Activated T-helper 2 cell treated with anti-CD3 and anti-CD28 coated beads, Interferon-gamma antibody, Interleukin-2, Interleukin-4, amounts not matched to agents 10 μg/mL and 5 μg/mL and 100 μg/mL, durations not matched to agents 14 hours and 24 hours and 36 hours (primary cell): ENCODE measurements at regions of chr9 and their contacts with region 1.

Region 1: GRCh38 chr9:71768388-71769174 is at the start of gene CEMIP2:
- DNase-seq: peak; percentile 86
- H3K4me3 Mint-ChIP-seq: peak within 1 kb of the TSS; percentile 89
- H3K27ac Mint-ChIP-seq: peak within 1 kb of the TSS; percentile 88
- H3K4me1 Mint-ChIP-seq: peaks cover 44% of the 10 kb centered on the region
- H3K27me3 Mint-ChIP-seq: no peaks in the 10 kb centered on the region
- total RNA-seq, gene CEMIP2: 44.8 and 45.3 TPM in 2 replicates

Region 2: GRCh38 chr9:71171517-71171916 is 597.1 kb before region 1 on chr9:
- intact Hi-C with region 1: no loop called
- DNase-seq: no peak
- H3K4me3 Mint-ChIP-seq: no peak overlapping the region
- H3K27ac Mint-ChIP-seq: no peak overlapping the region
- H3K4me1 Mint-ChIP-seq: no peaks in the 10 kb centered on the region
- H3K27me3 Mint-ChIP-seq: no peaks in the 10 kb centered on the region

Region 3: GRCh38 chr9:71285191-71285656 is 483.4 kb before region 1 on chr9:
- intact Hi-C with region 1: loop called (anchors 2 kb)
- DNase-seq: no peak
- H3K4me3 Mint-ChIP-seq: no peak overlapping the region
- H3K27ac Mint-ChIP-seq: no peak overlapping the region
- H3K4me1 Mint-ChIP-seq: no peaks in the 10 kb centered on the region
- H3K27me3 Mint-ChIP-seq: no peaks in the 10 kb centered on the region

Region 4: DNA sequence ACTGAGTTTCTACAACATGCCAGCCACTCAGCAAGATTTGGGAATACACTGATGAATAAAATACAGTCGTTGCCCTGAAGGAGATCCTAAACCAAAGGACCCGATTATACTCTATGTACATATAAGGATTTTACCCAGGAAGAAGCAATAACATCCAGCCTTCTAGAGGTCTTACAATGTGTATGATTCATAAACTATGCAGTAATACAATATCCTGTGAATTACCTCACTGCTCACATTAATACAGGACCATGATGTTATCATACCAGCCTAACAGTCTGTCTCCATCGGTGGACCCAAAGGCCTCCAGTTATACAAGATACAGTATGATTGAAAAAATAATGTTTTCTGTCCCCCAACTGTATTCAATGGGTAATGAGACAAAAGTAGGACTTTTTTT is 336.6 kb before region 1 on chr9:
- intact Hi-C with region 1: no loop called
- DNase-seq: no peak
- H3K4me3 Mint-ChIP-seq: no peak overlapping the region
- H3K27ac Mint-ChIP-seq: no peak overlapping the region
- H3K4me1 Mint-ChIP-seq: no peaks in the 10 kb centered on the region
- H3K27me3 Mint-ChIP-seq: no peaks in the 10 kb centered on the region

Region 5: GRCh38 chr9:71683598-71684235 is 84.9 kb before region 1 on chr9:
- intact Hi-C with region 1: loop called (anchors 5 kb)
- DNase-seq: no peak
- H3K4me3 Mint-ChIP-seq: no peak overlapping the region
- H3K27ac Mint-ChIP-seq: no peak overlapping the region
- H3K4me1 Mint-ChIP-seq: peaks cover 38% of the 10 kb centered on the region
- H3K27me3 Mint-ChIP-seq: no peaks in the 10 kb centered on the region

Region 6: GRCh38 chr9:71752928-71753327 is 15.7 kb before region 1 on chr9:
- intact Hi-C with region 1: loop called (anchors 2 kb)
- DNase-seq: no peak
- H3K4me3 Mint-ChIP-seq: no peak overlapping the region
- H3K27ac Mint-ChIP-seq: no peak overlapping the region
- H3K4me1 Mint-ChIP-seq: peaks cover 28% of the 10 kb centered on the region
- H3K27me3 Mint-ChIP-seq: no peaks in the 10 kb centered on the region

Region 7: DNA sequence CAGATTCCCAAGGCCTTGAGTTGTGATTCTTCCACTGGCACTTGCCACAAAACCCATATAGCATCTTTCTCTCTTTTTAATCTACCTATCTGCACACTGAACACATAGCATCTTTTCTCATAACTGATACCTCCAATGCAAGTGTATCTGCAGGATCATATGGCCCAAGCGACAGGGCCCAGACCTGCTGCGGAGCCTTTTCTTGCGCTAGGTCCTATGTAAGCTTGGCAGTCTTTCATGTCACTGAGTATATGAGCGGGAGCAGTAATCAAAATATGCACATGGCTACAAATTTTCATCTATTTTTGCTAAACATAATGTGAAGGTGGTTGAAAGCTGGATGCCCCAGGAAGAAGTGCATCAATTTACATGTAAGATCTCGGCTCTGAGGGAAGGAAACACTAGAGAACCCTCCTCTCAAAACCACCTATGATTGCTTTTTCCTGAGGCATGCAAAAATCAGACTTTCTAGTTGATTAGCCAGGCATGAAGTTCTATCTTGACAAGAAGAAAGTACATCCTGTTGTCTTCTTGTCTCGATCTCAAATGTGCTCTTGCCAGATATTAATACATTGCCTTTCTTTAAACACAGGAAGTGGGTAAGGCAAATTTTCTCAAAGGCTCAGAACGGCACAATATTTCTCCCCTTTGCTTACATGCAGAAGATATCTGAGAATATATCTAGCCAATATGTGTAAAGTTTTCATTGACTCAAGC is 26.7 kb after region 1 on chr9:
- intact Hi-C with region 1: loop called (anchors 1 kb)
- DNase-seq: no peak
- H3K4me3 Mint-ChIP-seq: peak overlapping the region; percentile 56
- H3K27ac Mint-ChIP-seq: peak overlapping the region; percentile 96
- H3K4me1 Mint-ChIP-seq: peaks cover 39% of the 10 kb centered on the region
- H3K27me3 Mint-ChIP-seq: no peaks in the 10 kb centered on the region

Region 8: DNA sequence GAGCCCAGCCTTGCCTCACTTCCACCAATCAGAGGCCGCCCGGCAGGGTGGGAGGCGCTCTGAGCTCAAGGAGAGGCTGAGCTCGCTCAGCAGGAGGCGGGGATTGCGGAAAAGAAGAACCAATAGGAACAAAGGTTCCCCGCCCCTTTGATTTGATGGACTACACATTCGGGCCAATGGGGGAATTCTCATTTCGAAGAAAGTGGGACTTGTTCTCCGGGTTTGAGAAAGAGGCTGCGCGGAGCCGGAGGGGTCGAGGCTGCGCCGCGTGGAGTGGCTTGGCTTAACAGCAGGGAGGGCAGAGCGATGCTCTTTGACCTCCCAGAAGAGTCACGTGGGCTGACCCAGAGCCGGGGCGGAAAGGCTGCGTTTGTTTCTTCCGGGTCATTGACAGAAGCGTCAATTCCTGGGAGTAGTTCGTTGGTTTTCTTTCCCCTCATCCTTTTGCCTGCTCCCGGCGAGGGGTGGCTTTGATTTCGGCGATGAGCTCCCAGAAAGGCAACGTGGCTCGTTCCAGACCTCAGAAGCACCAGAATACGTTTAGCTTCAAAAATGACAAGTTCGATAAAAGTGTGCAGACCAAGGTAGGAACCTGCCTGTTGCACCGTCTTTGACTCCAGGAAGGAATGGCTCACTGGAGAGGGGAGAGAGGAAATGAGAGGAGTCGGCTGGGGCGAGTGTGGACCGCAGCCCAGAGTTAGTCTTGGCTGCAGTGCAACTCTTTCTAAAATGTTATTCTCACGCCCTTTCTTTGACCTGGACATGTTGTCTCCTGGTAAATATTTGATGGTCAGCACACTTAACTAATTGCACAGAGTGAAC is 142.9 kb after region 1 on chr9 and contains the start of gene C9orf85:
- intact Hi-C with region 1: loop called (anchors 1 kb)
- DNase-seq: peak; percentile 97
- H3K4me3 Mint-ChIP-seq: peak within 1 kb of the TSS; percentile 100
- H3K27ac Mint-ChIP-seq: peak within 1 kb of the TSS; percentile 99
- H3K4me1 Mint-ChIP-seq: peaks cover 43% of the 10 kb centered on the region
- H3K27me3 Mint-ChIP-seq: no peaks in the 10 kb centered on the region
- total RNA-seq, gene C9orf85: 8.3 and 9.8 TPM in 2 replicates